HepG2 (cell line): ENCODE measurements at regions of chr2 and their contacts with region 1.

Region 1: GRCh38 chr2:219177552-219178376 is at the start of gene RETREG2:
- DNase-seq: peak; percentile 93
- ATAC-seq: peak; percentile 83
- H3K4me3 ChIP-seq: peak within 1 kb of the TSS; percentile 72 to 87 (median 79)
- H3K27ac ChIP-seq: peak within 1 kb of the TSS; percentile 90
- H3K4me1 ChIP-seq: peaks cover 37% of the 10 kb centered on the region
- H3K27me3 ChIP-seq: no peaks in the 10 kb centered on the region; a peak in 1 of 5 replicates
- CTCF ChIP-seq: peak; percentile 65
- EP300 ChIP-seq: peak in 1 of 2 experiments; percentile 5; a peak in 2 of 4 replicates
- POLR2A ChIP-seq: peak in 1 of 2 experiments; percentile 82; a peak in 2 of 4 replicates
- RAD21 ChIP-seq: peak; percentile 83
- total RNA-seq, gene RETREG2: 59.7 and 86.0 TPM in 2 replicates

Region 2: GRCh38 chr2:219160186-219161017 is 17.4 kb before region 1 on chr2 and contains the start of gene NHEJ1:
- CTCF ChIA-PET with region 1: interaction called, 4 read pairs
- POLR2A ChIA-PET with region 1: interaction called, 17 read pairs
- in situ Hi-C with region 1: no loop called
- intact Hi-C with region 1: loop called (anchors 1 kb)
- DNase-seq: peak; percentile 90
- ATAC-seq: peak; percentile 91
- H3K4me3 ChIP-seq: peak within 1 kb of the TSS; percentile 76 to 94 (median 86)
- H3K27ac ChIP-seq: peak within 1 kb of the TSS; percentile 93
- H3K4me1 ChIP-seq: peaks cover 18% of the 10 kb centered on the region
- H3K27me3 ChIP-seq: no peaks in the 10 kb centered on the region
- CTCF ChIP-seq: peak; percentile 96
- EP300 ChIP-seq: no peak
- POLR2A ChIP-seq: peak; percentile 68 to 93
- RAD21 ChIP-seq: peak; percentile 97
- total RNA-seq, gene NHEJ1: 30.7 and 42.1 TPM in 2 replicates

Region 3: DNA sequence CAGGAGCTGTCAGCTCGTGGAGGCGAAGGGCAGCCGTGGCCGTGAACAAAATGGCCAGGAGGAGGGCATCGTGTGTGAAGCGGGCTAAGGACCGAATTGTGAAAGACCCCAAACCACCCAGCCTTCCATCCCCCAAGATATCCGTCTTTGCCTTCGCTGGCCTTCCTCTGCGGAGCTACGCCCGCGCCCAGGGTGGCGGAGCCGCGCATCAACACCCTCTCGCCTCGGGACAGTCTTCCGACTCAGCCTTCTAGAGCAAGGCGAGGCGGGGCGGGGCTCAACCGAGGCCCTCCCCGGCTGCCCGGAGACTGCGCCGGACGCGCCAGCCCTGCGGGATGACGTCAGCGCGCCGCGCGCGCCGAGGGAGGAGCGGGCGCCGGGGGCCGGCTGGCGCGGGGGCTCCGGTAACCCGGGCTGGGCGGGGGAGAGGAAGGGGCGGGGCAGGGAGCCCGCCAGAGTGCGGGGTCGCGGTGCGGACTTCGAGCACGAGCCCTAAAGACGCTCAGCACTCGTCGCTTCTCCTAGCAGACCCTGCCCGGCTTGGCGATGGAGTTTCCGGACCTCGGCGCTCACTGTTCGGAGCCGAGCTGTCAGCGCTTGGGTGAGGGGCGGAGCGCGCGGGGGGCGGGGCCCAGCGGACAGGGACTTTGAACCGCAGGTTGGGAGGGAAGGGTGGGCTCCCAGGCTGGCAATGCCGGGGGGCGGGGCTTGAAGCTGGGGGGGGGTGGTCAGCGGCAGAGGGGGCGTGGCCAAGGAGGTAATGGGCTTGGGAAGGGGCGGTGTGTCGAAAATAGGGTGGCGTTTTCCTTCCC is 28.9 kb after region 1 on chr2 and contains the start of gene ZFAND2B:
- CTCF ChIA-PET with region 1: interaction called, 17 read pairs
- POLR2A ChIA-PET with region 1: interaction called, 227 read pairs
- in situ Hi-C with region 1: loop called (anchors 5 kb)
- intact Hi-C with region 1: loop called (anchors 1 kb)
- DNase-seq: peak; percentile 86
- ATAC-seq: peak; percentile 83
- H3K4me3 ChIP-seq: peak within 1 kb of the TSS; percentile 65 to 86 (median 74)
- H3K27ac ChIP-seq: peak within 1 kb of the TSS; percentile 95
- H3K4me1 ChIP-seq: peaks cover 54% of the 10 kb centered on the region
- H3K27me3 ChIP-seq: no peaks in the 10 kb centered on the region; a peak in 1 of 5 replicates
- CTCF ChIP-seq: no peak; the same call in 1 of the 2 replicates
- EP300 ChIP-seq: peak in 1 of 2 experiments; percentile 4; a peak in 1 of 4 replicates
- POLR2A ChIP-seq: peak in 1 of 2 experiments; percentile 97; a peak in 2 of 4 replicates
- RAD21 ChIP-seq: no peak; the same call in none of the 2 replicates
- total RNA-seq, gene ZFAND2B: 39.4 and 53.3 TPM in 2 replicates

Region 4: GRCh38 chr2:219229305-219230058 is 51.7 kb after region 1 on chr2 and contains the starts of genes ANKZF1 and ATG9A:
- CTCF ChIA-PET with region 1: no interaction called
- POLR2A ChIA-PET with region 1: interaction called, 21 read pairs
- in situ Hi-C with region 1: no loop called
- intact Hi-C with region 1: no loop called
- DNase-seq: peak; percentile 99
- ATAC-seq: peak; percentile 94
- H3K4me3 ChIP-seq: peak within 1 kb of the TSS; percentile 91 to 93 (median 93)
- H3K27ac ChIP-seq: peak within 1 kb of the TSS; percentile 81
- H3K4me1 ChIP-seq: peaks cover 39% of the 10 kb centered on the region
- H3K27me3 ChIP-seq: no peaks in the 10 kb centered on the region; a peak in 1 of 5 replicates
- CTCF ChIP-seq: peak; percentile 9; the same call in 1 of the 2 replicates
- EP300 ChIP-seq: peak; percentile 20 to 21; a peak in 3 of 4 replicates
- POLR2A ChIP-seq: peak; percentile 85 to 92
- RAD21 ChIP-seq: peak; percentile 73
- total RNA-seq, gene ANKZF1: 14.6 and 25.3 TPM in 2 replicates
- total RNA-seq, gene ATG9A: 22.2 and 35.0 TPM in 2 replicates

Region 5: GRCh38 chr2:219253753-219254590 is 76.2 kb after region 1 on chr2 and contains the start of gene TUBA4A:
- CTCF ChIA-PET with region 1: no interaction called
- POLR2A ChIA-PET with region 1: interaction called, 26 read pairs
- in situ Hi-C with region 1: no loop called
- intact Hi-C with region 1: no loop called
- DNase-seq: peak; percentile 58
- ATAC-seq: peak; percentile 62
- H3K4me3 ChIP-seq: peak within 1 kb of the TSS; percentile 62 to 83 (median 62)
- H3K27ac ChIP-seq: no peak within 1 kb of the TSS
- H3K4me1 ChIP-seq: peaks cover 60% of the 10 kb centered on the region
- H3K27me3 ChIP-seq: peaks cover 2 to 40% of the 10 kb centered on the region in 2 experiments; a peak in 4 of 5 replicates
- CTCF ChIP-seq: peak; percentile 6; the same call in 1 of the 2 replicates
- EP300 ChIP-seq: no peak
- POLR2A ChIP-seq: peak in 1 of 2 experiments; percentile 48; a peak in 1 of 4 replicates
- RAD21 ChIP-seq: no peak
- total RNA-seq, gene TUBA4A: 0.97 and 1.3 TPM in 2 replicates

Region 6: DNA sequence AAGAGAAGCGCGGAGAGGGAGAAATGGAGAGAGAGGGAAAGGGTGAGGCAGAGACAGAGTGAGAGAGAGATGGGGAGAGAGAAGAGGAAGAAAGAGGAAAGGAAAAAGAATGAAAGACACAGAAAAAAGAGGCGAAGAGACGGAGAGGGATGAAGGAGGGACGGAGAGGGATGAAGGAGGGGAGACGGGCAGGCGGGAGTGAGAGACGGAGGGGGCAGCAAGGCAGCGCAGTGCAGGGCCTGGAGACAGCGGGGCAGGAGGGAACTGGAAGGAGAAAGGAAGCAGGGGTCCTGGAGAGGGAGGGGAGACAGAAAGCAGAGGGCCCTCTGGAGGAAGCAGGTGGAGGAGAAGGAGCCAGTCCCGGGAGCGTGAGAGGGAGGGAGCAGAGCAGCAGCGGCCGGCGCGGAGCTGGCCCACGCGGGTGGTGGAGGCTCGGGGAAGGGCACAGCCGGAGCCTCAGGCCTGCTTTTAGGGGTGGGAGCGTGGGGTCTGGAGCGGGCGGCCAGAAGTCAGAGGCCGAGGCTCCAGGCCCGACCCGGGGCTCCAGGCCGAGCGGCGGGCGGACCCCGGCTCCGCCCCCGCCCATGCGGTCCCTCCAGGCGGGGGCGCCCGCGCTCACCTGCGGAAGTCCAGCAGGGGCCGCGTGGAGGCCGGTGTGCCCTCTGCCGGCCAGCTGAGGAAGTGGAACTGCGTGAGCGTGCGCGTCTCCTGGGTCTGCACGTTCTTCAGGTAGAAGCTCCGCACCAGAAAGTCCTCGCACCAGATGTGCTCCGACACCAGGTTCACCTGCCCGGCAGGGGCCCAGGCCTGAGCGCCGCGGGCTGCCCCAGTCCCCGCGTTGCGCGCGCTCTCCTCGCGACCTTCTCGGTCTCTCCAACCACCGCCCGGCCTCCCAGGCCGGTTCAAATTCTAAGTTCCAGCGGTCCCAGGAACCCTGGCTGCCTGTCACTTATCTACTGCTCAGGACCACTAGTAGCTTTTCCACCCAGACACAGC is 116.9 kb after region 1 on chr2:
- CTCF ChIA-PET with region 1: no interaction called
- POLR2A ChIA-PET with region 1: interaction called, 19 read pairs
- in situ Hi-C with region 1: loop called (anchors 5 kb)
- intact Hi-C with region 1: loop called (anchors 2 kb)
- DNase-seq: peak; percentile 80
- ATAC-seq: peak; percentile 85
- H3K4me3 ChIP-seq: peak overlapping the region; percentile 60 to 81 (median 80)
- H3K27ac ChIP-seq: no peak overlapping the region
- H3K4me1 ChIP-seq: peaks cover 36% of the 10 kb centered on the region
- H3K27me3 ChIP-seq: peaks cover 6 to 83% of the 10 kb centered on the region in 2 experiments; a peak in 4 of 5 replicates
- CTCF ChIP-seq: peak; percentile 93
- EP300 ChIP-seq: peak; percentile 48 to 53; a peak in 1 of 4 replicates
- POLR2A ChIP-seq: peak; percentile 48 to 70; a peak in 3 of 4 replicates
- RAD21 ChIP-seq: peak; percentile 99